PC-3 (cell line): ENCODE measurements at regions of chr5 and their contacts with region 1.

Region 1: DNA sequence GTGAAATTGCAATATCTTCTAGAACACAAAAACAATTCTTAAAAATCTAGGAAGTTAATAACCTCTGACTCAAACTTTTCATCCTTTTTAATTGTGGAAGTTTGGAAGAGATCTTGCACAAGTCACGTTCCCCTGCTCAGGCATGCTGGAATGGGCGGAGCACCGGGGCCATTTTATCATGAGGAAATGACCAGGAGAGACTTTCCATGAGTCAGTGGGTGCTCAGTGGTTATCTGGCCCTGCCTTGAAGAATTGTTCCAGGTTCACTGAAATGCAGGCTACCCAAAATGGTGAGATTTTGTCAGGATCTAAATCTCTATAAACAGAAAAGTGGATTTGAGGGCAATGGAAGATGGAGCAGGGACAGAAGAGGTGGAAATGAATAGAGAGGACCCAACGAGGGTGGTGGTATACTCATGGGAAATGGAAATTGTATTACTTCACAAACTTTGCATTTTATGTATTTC is 61.2 kb downstream of the FYB1 start:
- DNase-seq: peak; percentile 67
- ATAC-seq: peak; percentile 76
- H3K4me3 ChIP-seq: no peak overlapping the region
- H3K27ac ChIP-seq: 0 out of 2 replicates have a peak overlapping the region, but pooled peaks have one; percentile 3
- H3K4me1 ChIP-seq: peaks cover 13% of the 10 kb centered on the region
- H3K27me3 ChIP-seq: no peaks in the 10 kb centered on the region
- CTCF ChIP-seq: no peak

Region 2: GRCh38 chr5:39194466-39195136 is 36.4 kb after region 1 on chr5:
- CTCF ChIA-PET with region 1: interaction called, 6 read pairs
- POLR2A ChIA-PET with region 1: no interaction called
- intact Hi-C with region 1: loop called (anchors 5 kb)
- DNase-seq: peak; percentile 82
- ATAC-seq: peak; percentile 21; the same call in 1 of the 2 replicates
- H3K4me3 ChIP-seq: no peak overlapping the region
- H3K27ac ChIP-seq: peak overlapping the region; percentile 90
- H3K4me1 ChIP-seq: peaks cover 46% of the 10 kb centered on the region
- H3K27me3 ChIP-seq: no peaks in the 10 kb centered on the region
- CTCF ChIP-seq: no peak